ENCODE measurements at regions of chr1 and their contacts with region 1.

Region 1: GRCh38 chr1:66288048-66288447 is 245.9 kb upstream of the SGIP1 start:
- DNase-seq: peak; percentile 55
- ATAC-seq: peak; percentile 37
- H3K4me3 Mint-ChIP-seq: no peak overlapping the region
- H3K27ac Mint-ChIP-seq: no peak overlapping the region
- H3K4me1 Mint-ChIP-seq: peaks cover 74% of the 10 kb centered on the region
- H3K27me3 Mint-ChIP-seq: no peaks in the 10 kb centered on the region

Region 2: DNA sequence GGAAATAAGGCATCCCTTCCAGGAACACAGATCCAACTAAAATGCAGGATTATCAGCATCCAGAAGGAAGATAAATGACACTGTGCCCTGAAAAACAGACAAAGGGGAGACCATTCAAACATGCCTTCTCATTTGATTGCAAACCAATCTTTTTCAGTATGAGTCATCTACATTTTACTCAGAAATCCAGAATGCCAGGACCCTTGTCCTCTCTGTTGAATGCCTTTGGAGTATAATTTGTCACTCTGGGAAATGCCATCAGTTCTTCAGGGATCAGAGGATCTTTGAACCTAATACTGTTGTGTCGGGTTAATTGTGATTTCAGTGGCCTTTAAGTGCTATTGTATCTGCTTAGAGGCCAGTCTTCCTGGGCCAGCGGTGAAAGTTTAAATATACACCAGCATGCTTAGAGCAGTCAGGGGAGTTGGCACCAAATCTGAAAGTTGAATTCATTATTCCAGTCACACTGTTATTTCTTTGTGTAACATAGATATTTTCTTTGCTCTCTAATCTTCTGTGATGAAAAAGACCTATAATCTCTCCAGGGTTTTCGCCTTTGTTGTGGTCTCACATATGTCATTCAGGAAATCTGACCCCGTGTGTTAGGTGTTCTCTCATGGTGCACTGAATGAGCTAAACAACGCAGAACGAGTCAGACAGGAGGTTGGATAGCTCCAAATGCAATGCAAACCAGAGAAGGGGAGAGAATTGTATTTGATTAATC is 118.9 kb before region 1 on chr1:
- CTCF ChIA-PET with region 1: no interaction called
- POLR2A ChIA-PET with region 1: no interaction called
- intact Hi-C with region 1: no loop called
- DNase-seq: no peak
- ATAC-seq: peak; percentile 57
- H3K4me3 Mint-ChIP-seq: no peak overlapping the region
- H3K27ac Mint-ChIP-seq: no peak overlapping the region
- H3K4me1 Mint-ChIP-seq: peaks cover 15% of the 10 kb centered on the region
- H3K27me3 Mint-ChIP-seq: peaks cover 12% of the 10 kb centered on the region

Region 3: GRCh38 chr1:66316464-66317247 is 28.6 kb after region 1 on chr1:
- CTCF ChIA-PET with region 1: no interaction called
- POLR2A ChIA-PET with region 1: no interaction called
- intact Hi-C with region 1: no loop called
- DNase-seq: no peak
- ATAC-seq: peak; percentile 26
- H3K4me3 Mint-ChIP-seq: no peak overlapping the region
- H3K27ac Mint-ChIP-seq: peak overlapping the region; percentile 5
- H3K4me1 Mint-ChIP-seq: peaks cover 7% of the 10 kb centered on the region
- H3K27me3 Mint-ChIP-seq: no peaks in the 10 kb centered on the region

Region 4: GRCh38 chr1:66339944-66340343 is 51.9 kb after region 1 on chr1:
- CTCF ChIA-PET with region 1: interaction called, 30 read pairs
- POLR2A ChIA-PET with region 1: no interaction called
- intact Hi-C with region 1: loop called in 1 of 2 experiments (anchors 1 kb)
- DNase-seq: no peak
- ATAC-seq: no peak
- H3K4me3 Mint-ChIP-seq: peak overlapping the region; percentile 69
- H3K27ac Mint-ChIP-seq: peak overlapping the region; percentile 85
- H3K4me1 Mint-ChIP-seq: peaks cover 68% of the 10 kb centered on the region
- H3K27me3 Mint-ChIP-seq: no peaks in the 10 kb centered on the region

Measured in activated CD4-positive, alpha-beta T cell treated with anti-CD3 and anti-CD28 coated beads for 36 hours (primary cell).